Right ventricle myocardium inferior (tissue), 1 donor: ENCODE measurements at regions of chr4 and their contacts with region 1.

Region 1: DNA sequence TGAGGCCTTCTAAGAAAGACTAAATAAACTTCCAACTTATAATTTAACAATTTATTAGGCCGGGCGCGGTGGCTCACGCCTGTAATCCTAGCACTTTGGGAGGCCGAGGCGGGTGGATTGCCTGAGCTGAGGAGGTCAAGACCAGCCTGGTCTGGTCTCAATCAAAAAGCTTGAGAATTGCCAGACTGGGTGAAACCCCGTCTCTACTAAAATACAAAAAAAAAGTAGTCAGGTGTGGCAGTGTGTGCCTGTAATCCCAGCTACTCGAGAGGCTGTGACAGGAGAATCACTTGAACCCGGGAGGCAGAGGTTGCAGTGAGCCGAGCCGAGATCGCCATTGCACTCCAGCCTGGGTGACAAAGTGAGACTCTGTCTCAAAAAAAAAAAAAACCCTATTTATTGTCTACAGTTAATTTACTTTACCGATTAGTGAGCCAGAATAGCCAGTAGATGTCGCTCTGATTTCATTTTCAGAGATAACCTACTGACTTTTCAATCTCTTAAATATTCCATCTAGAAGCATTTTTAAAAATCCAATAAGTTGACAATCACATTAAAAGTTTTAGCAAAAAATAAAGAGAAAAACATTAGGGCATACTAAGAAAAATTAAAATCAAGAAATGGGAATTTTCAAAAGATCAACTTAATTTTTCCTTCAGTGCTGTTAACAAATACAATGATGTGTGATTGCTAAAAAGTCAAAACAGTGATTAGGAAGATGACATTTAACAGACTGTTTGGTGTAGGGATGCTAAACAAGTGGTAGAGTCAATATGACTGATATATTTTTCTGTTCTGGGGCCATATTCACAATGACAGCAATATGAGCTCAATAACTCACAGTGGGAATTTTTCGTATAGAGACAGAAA is 4.3 kb upstream of the SHROOM3 start:
- DNase-seq: no peak
- ATAC-seq: no peak

Region 2: DNA sequence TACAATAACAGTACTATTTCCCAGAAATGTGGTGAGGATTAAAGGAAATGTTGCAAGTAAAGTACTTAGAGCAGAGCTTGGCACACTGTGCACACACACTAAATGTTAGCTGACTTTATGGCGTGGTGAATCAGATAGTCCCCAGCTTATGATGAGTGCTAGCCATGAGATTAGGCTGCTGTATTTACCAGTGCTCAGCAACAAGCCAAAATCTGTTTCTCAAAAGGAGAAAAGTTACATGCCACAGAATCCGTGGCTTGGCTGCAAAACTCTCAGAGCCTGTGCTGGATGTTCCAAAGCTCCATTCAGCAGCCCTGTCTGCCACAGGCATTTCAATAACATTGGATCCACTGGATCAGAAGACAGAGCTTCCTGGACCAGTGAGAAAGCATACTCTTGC is 137.0 kb before region 1 on chr4:
- intact Hi-C with region 1: no loop called
- DNase-seq: no peak
- ATAC-seq: peak; percentile 76

Region 3: DNA sequence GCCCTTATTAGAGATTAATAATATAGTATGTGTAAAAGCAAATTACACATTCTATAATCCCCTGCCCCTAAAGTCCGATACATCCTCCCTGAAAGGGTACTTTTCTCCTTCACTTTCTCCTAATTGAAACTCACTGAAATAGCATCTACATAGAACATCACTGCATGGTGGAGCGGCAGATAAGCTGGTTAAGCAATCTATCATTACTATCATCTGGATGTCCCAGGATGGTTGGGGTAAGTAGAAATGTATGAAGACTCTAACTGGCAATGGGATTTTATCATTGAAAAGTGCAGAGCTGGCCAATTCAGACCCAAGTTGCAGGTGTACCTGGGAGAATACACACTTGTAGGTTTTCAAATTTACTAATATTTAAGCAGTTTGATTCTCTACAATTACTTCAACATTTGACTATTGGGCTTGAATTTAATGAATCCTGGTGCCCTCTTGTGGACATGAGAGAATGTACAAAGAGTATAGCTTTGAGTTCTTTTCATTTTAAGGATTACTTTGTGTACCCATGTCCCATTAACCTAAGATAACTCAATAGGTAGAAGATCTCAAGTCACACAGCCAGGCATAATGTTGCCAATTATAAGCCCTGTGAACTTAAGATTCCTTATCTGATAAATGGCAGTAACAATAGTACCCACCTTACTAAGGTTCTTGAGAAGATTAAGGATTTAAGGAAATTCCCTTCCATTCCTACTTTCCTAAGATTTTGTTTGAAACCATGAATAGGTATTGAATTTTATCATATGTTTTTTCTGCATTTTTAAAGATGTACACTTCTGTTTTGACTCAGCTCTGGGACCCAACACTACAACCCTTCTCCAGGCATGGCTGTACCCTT is 74.1 kb after region 1 on chr4:
- intact Hi-C with region 1: loop called (anchors 2 kb)
- DNase-seq: no peak
- ATAC-seq: no peak

Region 4: DNA sequence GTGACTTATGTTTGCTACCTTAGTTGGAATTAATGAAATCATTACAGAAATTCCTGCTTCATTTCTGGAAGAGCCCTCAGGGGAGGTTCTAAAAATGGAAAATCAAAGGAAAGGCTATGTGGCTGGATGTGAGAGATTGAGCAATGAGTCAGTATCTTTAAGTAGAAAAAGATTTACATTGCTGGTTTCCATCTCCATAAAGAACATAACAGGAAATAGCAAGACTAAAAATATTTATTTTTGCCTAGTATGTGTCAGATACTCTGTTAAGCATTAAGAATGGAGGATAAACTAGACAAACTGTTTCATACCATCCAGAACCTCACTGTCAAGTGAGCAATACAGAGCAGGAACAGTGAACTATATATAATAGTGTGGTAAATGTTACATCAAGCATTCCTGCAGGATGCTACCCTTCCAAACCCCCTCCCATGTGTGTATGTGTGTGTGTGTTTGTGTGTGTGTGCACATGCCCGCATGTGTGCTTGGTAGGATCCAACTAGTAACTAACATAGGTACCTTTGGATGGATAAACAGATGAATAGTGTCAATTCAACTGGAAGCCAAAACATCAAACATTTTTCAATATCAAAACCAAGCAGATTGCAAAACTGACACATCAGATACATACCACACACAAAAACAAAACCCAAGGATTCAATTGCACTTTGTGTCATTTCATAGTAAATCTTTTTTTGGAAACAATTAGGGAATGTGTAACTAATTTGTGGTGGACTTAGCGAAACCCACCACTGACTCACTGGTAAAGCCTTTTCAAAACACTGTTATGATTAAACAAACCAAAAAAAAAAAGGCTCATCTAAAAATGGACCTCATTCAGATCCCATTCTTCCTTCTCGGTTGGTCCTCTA is 227.7 kb after region 1 on chr4:
- intact Hi-C with region 1: no loop called
- DNase-seq: no peak
- ATAC-seq: no peak

Region 5: GRCh38 chr4:76758290-76758882 is 327.6 kb after region 1 on chr4:
- intact Hi-C with region 1: loop called (anchors 5 kb)
- DNase-seq: no peak
- ATAC-seq: peak; percentile 55